ENCODE measurements at regions of chrX and their contacts with region 1.

Region 1: GRCh38 chrX:19981947-19982346 is 8.9 kb downstream of the BCLAF3 start:
- DNase-seq: no peak

Region 2: GRCh38 chrX:19911784-19912183 is 70.2 kb before region 1 on chrX:
- intact Hi-C with region 1: loop called in 1 of 2 experiments (anchors 2 kb)
- DNase-seq: no peak

Measured in posterior vena cava (tissue), 2 donors.